ENCODE measurements at regions of chr7 and their contacts with region 1.

Region 1: GRCh38 chr7:2471396-2471795 is 4.8 kb downstream of the GRIFIN start:
- DNase-seq: no peak
- ATAC-seq: no peak
- H3K4me3 Mint-ChIP-seq: no peak overlapping the region
- H3K27ac Mint-ChIP-seq: no peak overlapping the region
- H3K4me1 Mint-ChIP-seq: peaks cover 5% of the 10 kb centered on the region
- H3K27me3 Mint-ChIP-seq: peaks cover 19% of the 10 kb centered on the region

Region 2: GRCh38 chr7:2384354-2385243 is 86.8 kb before region 1 on chr7:
- CTCF ChIA-PET with region 1: interaction called, 13 read pairs
- DNase-seq: no peak
- ATAC-seq: peak; percentile 35
- H3K4me3 Mint-ChIP-seq: no peak overlapping the region
- H3K27ac Mint-ChIP-seq: no peak overlapping the region
- H3K4me1 Mint-ChIP-seq: no peaks in the 10 kb centered on the region
- H3K27me3 Mint-ChIP-seq: no peaks in the 10 kb centered on the region

Region 3: GRCh38 chr7:2403718-2404648 is 67.4 kb before region 1 on chr7:
- CTCF ChIA-PET with region 1: interaction called, 12 read pairs
- DNase-seq: peak; percentile 62
- ATAC-seq: peak; percentile 16
- H3K4me3 Mint-ChIP-seq: peak overlapping the region; percentile 84
- H3K27ac Mint-ChIP-seq: peak overlapping the region; percentile 99
- H3K4me1 Mint-ChIP-seq: peaks cover 59% of the 10 kb centered on the region
- H3K27me3 Mint-ChIP-seq: no peaks in the 10 kb centered on the region

Region 4: GRCh38 chr7:2451171-2452073 is 20.0 kb before region 1 on chr7:
- CTCF ChIA-PET with region 1: interaction called, 108 read pairs
- DNase-seq: peak; percentile 83
- ATAC-seq: peak; percentile 95
- H3K4me3 Mint-ChIP-seq: no peak overlapping the region
- H3K27ac Mint-ChIP-seq: no peak overlapping the region
- H3K4me1 Mint-ChIP-seq: peaks cover 8% of the 10 kb centered on the region
- H3K27me3 Mint-ChIP-seq: peaks cover 12% of the 10 kb centered on the region

Region 5: GRCh38 chr7:2460188-2460587 is 11.2 kb before region 1 on chr7:
- CTCF ChIA-PET with region 1: interaction called, 36 read pairs
- DNase-seq: no peak
- ATAC-seq: no peak
- H3K4me3 Mint-ChIP-seq: no peak overlapping the region
- H3K27ac Mint-ChIP-seq: no peak overlapping the region
- H3K4me1 Mint-ChIP-seq: peaks cover 21% of the 10 kb centered on the region
- H3K27me3 Mint-ChIP-seq: peaks cover 4% of the 10 kb centered on the region

Region 6: DNA sequence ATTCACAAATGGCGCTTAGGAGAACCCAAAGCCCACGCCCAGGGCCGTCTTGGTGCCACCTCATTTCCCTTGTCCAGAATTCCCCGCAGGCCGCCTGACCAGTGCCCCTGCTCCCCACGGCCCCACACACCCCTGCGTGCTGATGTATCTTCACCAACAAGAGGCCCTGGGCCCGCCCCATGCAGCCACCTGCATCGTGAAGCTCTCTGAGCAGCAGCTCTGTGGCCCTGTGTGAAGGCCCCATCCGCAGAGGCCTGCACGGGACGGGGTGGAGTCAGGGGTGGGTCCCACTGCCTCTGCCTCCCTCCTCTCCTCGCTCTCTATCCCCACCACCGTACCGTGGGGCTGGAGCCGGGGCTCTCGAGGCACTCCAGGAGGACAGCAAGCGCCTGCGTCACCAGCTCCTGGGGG is 69.2 kb after region 1 on chr7:
- CTCF ChIA-PET with region 1: no interaction called
- DNase-seq: no peak
- ATAC-seq: no peak
- H3K4me3 Mint-ChIP-seq: no peak overlapping the region
- H3K27ac Mint-ChIP-seq: no peak overlapping the region
- H3K4me1 Mint-ChIP-seq: no peaks in the 10 kb centered on the region
- H3K27me3 Mint-ChIP-seq: no peaks in the 10 kb centered on the region

Region 7: GRCh38 chr7:3021825-3022224 is 550.4 kb after region 1 on chr7:
- CTCF ChIA-PET with region 1: no interaction called
- DNase-seq: no peak
- ATAC-seq: no peak
- H3K4me3 Mint-ChIP-seq: no peak overlapping the region
- H3K27ac Mint-ChIP-seq: no peak overlapping the region
- H3K4me1 Mint-ChIP-seq: peaks cover 12% of the 10 kb centered on the region
- H3K27me3 Mint-ChIP-seq: no peaks in the 10 kb centered on the region